PC-3 (cell line): ENCODE measurements at regions of chr9 and their contacts with region 1.

Region 1: GRCh38 chr9:133149126-133150107 is 14.3 kb downstream of the GBGT1 start:
- DNase-seq: peak; percentile 90
- ATAC-seq: peak; percentile 63
- H3K4me3 ChIP-seq: peak overlapping the region; percentile 59
- H3K27ac ChIP-seq: peak overlapping the region; percentile 23; the same call in 1 of the 2 replicates
- H3K4me1 ChIP-seq: peaks cover 17% of the 10 kb centered on the region; the same call in 1 of the 2 replicates
- H3K27me3 ChIP-seq: no peaks in the 10 kb centered on the region
- CTCF ChIP-seq: peak; percentile 39; the same call in 1 of the 2 replicates

Region 2: GRCh38 chr9:132160802-132161742 is 988.3 kb before region 1 on chr9:
- CTCF ChIA-PET with region 1: no interaction called
- POLR2A ChIA-PET with region 1: no interaction called
- intact Hi-C with region 1: no loop called
- DNase-seq: peak; percentile 48
- ATAC-seq: peak; percentile 61
- H3K4me3 ChIP-seq: peak overlapping the region; percentile 68
- H3K27ac ChIP-seq: no peak overlapping the region
- H3K4me1 ChIP-seq: no peaks in the 10 kb centered on the region
- H3K27me3 ChIP-seq: peaks cover 35% of the 10 kb centered on the region
- CTCF ChIP-seq: no peak

Region 3: DNA sequence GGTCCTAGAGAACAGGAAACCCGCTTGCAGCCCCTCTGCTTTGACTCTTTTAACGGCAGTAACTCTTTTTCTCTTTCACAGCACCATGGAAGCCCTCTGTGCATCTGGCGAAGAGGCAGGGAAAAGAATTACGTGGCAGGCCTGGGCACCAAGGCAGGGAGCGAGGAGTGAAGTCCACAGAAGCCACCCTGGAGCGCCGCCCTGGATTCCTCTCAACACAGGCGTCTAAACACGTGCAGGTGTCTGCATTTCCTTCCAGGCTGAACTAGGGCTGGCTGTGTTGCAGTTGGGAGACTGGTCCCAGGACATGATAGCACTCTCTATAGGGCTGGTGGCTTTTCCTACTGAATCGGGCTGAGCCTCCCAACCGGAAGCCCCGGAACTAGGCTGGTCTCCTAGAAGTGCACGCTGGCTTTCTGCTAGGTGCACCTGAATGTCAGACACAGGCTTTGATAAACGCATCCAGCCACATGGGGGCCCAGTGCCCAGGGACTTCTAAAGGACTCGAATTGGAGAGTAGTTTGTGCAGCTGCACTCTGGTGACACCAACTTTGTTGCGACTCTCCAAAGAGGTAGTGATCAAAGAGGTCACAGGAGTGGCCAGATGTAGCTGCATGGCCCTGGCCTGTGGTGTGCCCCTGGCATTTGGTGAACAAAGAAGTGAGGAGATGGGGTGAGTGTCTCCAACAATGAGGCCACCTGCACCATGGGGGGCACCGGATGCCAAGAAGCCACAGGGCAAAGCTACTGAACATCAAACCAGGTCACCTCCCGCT is 325.9 kb before region 1 on chr9:
- CTCF ChIA-PET with region 1: no interaction called
- POLR2A ChIA-PET with region 1: no interaction called
- intact Hi-C with region 1: no loop called
- DNase-seq: no peak
- ATAC-seq: no peak
- H3K4me3 ChIP-seq: no peak overlapping the region
- H3K27ac ChIP-seq: no peak overlapping the region
- H3K4me1 ChIP-seq: no peaks in the 10 kb centered on the region
- H3K27me3 ChIP-seq: no peaks in the 10 kb centered on the region
- CTCF ChIP-seq: no peak

Region 4: DNA sequence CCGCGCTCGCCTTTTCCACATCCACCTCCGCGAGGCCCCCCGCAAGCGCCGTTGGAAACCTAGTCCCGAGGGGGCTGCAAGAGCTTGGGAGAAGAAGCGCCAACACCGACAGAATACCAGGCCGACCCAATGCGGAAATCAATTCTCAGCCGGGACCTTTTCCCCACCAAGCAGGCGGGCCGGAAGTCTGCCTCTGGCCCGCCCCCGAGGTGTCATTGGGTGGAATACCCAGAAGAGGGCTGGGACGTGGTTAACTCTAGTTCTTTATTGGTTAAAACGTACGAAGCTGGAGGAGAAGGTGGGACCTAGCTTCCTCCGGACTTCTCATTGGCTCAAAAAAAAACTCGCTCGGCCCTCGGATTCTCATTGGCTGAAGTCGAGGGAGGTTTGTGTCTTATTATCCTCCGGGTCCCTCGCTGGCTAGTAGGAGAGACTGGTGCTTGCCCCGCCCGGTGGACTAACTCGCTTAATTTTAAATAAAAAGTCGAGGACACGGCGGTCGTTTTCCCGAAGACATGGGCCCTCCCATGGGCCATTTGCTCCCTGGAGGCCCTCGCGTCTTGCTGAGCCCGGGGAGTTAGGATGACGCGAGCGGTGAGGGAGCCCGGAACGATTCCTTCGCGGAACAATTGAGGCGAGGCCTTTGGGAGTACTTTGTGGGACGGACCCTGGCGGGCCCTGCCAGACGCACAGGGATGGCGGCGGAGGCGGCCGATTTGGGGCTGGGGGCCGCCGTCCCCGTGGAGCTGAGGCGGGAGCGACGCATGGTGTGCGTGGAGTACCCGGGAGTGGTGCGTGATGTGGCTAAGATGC is 118.9 kb before region 1 on chr9 and contains the start of gene GTF3C5:
- CTCF ChIA-PET with region 1: interaction called, 5 read pairs
- POLR2A ChIA-PET with region 1: interaction called, 5 read pairs
- intact Hi-C with region 1: loop called (anchors 2 kb)
- DNase-seq: peak; percentile 97
- ATAC-seq: peak; percentile 96
- H3K4me3 ChIP-seq: peak within 1 kb of the TSS; percentile 99
- H3K27ac ChIP-seq: peak within 1 kb of the TSS; percentile 41; the same call in 1 of the 2 replicates
- H3K4me1 ChIP-seq: peaks cover 12% of the 10 kb centered on the region
- H3K27me3 ChIP-seq: no peaks in the 10 kb centered on the region
- CTCF ChIP-seq: no peak
- total RNA-seq, gene GTF3C5: 78.5 and 98.3 TPM in 2 replicates

Region 5: GRCh38 chr9:133048569-133048968 is 100.8 kb before region 1 on chr9:
- CTCF ChIA-PET with region 1: no interaction called
- POLR2A ChIA-PET with region 1: no interaction called
- intact Hi-C with region 1: loop called (anchors 2 kb)
- DNase-seq: peak; percentile 30
- ATAC-seq: peak; percentile 49; the same call in 1 of the 2 replicates
- H3K4me3 ChIP-seq: no peak overlapping the region
- H3K27ac ChIP-seq: no peak overlapping the region
- H3K4me1 ChIP-seq: no peaks in the 10 kb centered on the region
- H3K27me3 ChIP-seq: no peaks in the 10 kb centered on the region
- CTCF ChIP-seq: peak; percentile 43

Region 6: DNA sequence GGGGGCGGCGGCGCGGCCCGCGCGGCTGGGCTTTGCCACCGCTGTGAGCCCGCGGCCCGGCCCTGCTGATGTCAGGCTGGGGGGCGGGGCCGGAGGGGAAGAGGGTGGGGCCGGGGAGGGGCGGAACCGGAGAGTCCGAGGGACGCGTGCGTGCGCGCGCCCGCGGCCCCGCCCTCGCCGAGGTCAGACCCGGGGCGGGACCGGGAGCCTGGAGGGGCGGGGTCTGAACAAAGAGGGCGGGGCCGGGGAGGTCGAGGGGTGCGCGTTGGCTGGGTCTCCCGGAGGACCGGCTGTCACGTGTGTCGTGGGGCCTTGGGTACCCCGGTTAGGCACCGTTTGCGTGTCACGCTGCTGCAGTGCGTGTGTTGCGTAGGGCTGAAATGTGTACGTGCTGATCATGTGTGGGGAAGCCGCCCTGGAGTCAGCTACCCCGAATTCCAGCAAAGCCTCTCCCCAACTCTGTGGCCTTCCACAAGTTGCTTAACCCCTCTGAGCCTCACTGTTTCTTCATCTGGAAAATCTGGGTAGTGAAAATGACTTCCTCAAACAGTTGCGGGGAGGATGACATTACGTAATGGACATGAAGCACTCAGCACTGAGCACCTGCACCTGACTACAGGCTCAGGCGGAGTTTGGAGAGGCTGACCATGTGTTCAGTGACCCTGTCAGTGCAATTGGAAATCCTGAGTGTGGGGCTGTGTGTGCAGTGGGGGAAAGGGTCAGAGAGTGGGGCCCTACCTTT is 28.0 kb before region 1 on chr9 and contains the start of gene RALGDS:
- CTCF ChIA-PET with region 1: interaction called, 5 read pairs
- POLR2A ChIA-PET with region 1: no interaction called
- intact Hi-C with region 1: loop called (anchors 2 kb)
- DNase-seq: peak; percentile 78
- ATAC-seq: peak; percentile 85
- H3K4me3 ChIP-seq: peak within 1 kb of the TSS; percentile 85
- H3K27ac ChIP-seq: peak within 1 kb of the TSS; percentile 16; the same call in 1 of the 2 replicates
- H3K4me1 ChIP-seq: peaks cover 4% of the 10 kb centered on the region; the same call in 1 of the 2 replicates
- H3K27me3 ChIP-seq: no peaks in the 10 kb centered on the region
- CTCF ChIP-seq: no peak
- total RNA-seq, gene RALGDS: 30.5 and 32.2 TPM in 2 replicates

Region 7: GRCh38 chr9:133327834-133328484 is 178.5 kb after region 1 on chr9:
- CTCF ChIA-PET with region 1: no interaction called
- POLR2A ChIA-PET with region 1: interaction called, 14 read pairs
- intact Hi-C with region 1: no loop called
- DNase-seq: no peak
- ATAC-seq: no peak
- H3K4me3 ChIP-seq: no peak overlapping the region
- H3K27ac ChIP-seq: no peak overlapping the region
- H3K4me1 ChIP-seq: no peaks in the 10 kb centered on the region
- H3K27me3 ChIP-seq: no peaks in the 10 kb centered on the region
- CTCF ChIP-seq: no peak

Region 8: GRCh38 chr9:133759146-133759900 is 609.9 kb after region 1 on chr9:
- CTCF ChIA-PET with region 1: no interaction called
- POLR2A ChIA-PET with region 1: no interaction called
- intact Hi-C with region 1: no loop called
- DNase-seq: no peak
- ATAC-seq: no peak
- H3K4me3 ChIP-seq: no peak overlapping the region
- H3K27ac ChIP-seq: no peak overlapping the region
- H3K4me1 ChIP-seq: no peaks in the 10 kb centered on the region
- H3K27me3 ChIP-seq: no peaks in the 10 kb centered on the region
- CTCF ChIP-seq: no peak